CD8-positive, alpha-beta T cell (primary cell): ENCODE measurements at regions of chr17 and their contacts with region 1.

Region 1: GRCh38 chr17:81101614-81102306 is 63.5 kb upstream of the PVALEF start:
- DNase-seq: peak; percentile 77 to 93 (median 86)
- ATAC-seq: peak; percentile 99
- H3K4me3 ChIP-seq: no peak overlapping the region
- H3K4me3 Mint-ChIP-seq: no peak overlapping the region
- H3K27ac ChIP-seq: no peak overlapping the region
- H3K27ac Mint-ChIP-seq: no peak overlapping the region
- H3K4me1 ChIP-seq: peaks cover 20% of the 10 kb centered on the region
- H3K4me1 Mint-ChIP-seq: peaks cover 9% of the 10 kb centered on the region
- H3K27me3 ChIP-seq: no peaks in the 10 kb centered on the region
- H3K27me3 Mint-ChIP-seq: no peaks in the 10 kb centered on the region
- CTCF ChIP-seq: peak; percentile 100

Region 2: GRCh38 chr17:80976701-80977100 is 125.1 kb before region 1 on chr17:
- CTCF ChIA-PET with region 1: no interaction called
- POLR2A ChIA-PET with region 1: no interaction called
- intact Hi-C with region 1: no loop called
- DNase-seq: no peak
- ATAC-seq: no peak
- H3K4me3 ChIP-seq: no peak overlapping the region
- H3K4me3 Mint-ChIP-seq: no peak overlapping the region
- H3K27ac ChIP-seq: no peak overlapping the region
- H3K27ac Mint-ChIP-seq: no peak overlapping the region
- H3K4me1 ChIP-seq: peaks cover 6% of the 10 kb centered on the region
- H3K4me1 Mint-ChIP-seq: peaks cover 7% of the 10 kb centered on the region
- H3K27me3 ChIP-seq: peaks cover 2 to 5% of the 10 kb centered on the region in 2 experiments
- H3K27me3 Mint-ChIP-seq: peaks cover 19% of the 10 kb centered on the region
- CTCF ChIP-seq: no peak

Region 3: GRCh38 chr17:80991645-80992076 is 110.1 kb before region 1 on chr17 and contains the start of gene CHMP6:
- CTCF ChIA-PET with region 1: interaction called, 33 read pairs
- POLR2A ChIA-PET with region 1: no interaction called
- intact Hi-C with region 1: loop called (anchors 1 kb)
- DNase-seq: peak; percentile 48 to 86 (median 70)
- ATAC-seq: peak; percentile 69
- H3K4me3 ChIP-seq: peak within 1 kb of the TSS; percentile 74 to 84
- H3K4me3 Mint-ChIP-seq: peak within 1 kb of the TSS; percentile 81
- H3K27ac ChIP-seq: peak within 1 kb of the TSS; percentile 59 to 84
- H3K27ac Mint-ChIP-seq: peak within 1 kb of the TSS; percentile 84
- H3K4me1 ChIP-seq: peaks cover 32% of the 10 kb centered on the region
- H3K4me1 Mint-ChIP-seq: peaks cover 20% of the 10 kb centered on the region
- H3K27me3 ChIP-seq: no peaks in the 10 kb centered on the region
- H3K27me3 Mint-ChIP-seq: no peaks in the 10 kb centered on the region
- CTCF ChIP-seq: no peak
- total RNA-seq, gene CHMP6: 10.6 to 11.5 TPM

Region 4: DNA sequence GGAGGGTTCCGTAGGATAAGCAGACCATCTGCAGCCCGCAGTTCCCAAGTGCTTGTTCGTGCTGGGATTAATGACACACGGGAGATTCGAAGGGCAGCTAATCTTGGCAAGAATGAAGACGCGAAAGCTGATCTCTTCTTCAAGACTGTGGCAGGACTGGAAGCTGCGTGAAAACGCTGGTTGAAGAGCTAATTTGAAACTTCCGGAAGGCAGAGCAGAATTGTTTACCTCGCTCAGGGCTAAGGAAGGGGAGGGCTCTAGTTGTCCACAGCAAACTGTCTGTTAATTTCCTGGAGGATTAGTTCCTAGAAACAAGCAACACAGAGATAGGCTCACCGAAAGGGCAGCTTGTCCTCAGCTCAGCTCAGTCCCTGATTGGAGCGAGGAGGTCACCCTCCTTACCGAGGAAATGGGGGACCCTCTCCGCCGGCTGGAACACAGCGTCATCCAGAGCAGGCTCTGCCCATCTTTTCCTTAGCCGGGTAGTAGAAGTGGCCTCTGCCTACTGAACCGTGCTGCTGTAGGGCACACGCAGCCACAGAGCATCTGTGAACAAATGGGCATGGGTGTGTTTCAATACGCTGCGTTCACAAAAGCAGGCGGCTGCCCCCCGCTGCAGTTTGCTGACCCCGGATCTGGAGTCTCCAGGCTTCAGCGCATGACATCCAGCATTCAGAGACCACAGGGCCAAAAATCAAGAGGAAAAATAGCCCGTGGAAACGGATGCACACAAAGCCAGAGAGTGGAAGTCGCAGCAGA is 83.5 kb before region 1 on chr17:
- CTCF ChIA-PET with region 1: interaction called, 43 read pairs
- POLR2A ChIA-PET with region 1: no interaction called
- intact Hi-C with region 1: loop called (anchors 1 kb)
- DNase-seq: peak in 7 of 9 experiments; percentile 23 to 74 (median 50)
- ATAC-seq: peak; percentile 79
- H3K4me3 ChIP-seq: peak overlapping the region; percentile 56 to 62
- H3K4me3 Mint-ChIP-seq: peak overlapping the region; percentile 78
- H3K27ac ChIP-seq: peak overlapping the region; percentile 53 to 87
- H3K27ac Mint-ChIP-seq: peak overlapping the region; percentile 94
- H3K4me1 ChIP-seq: peaks cover 24% of the 10 kb centered on the region
- H3K4me1 Mint-ChIP-seq: peaks cover 32% of the 10 kb centered on the region
- H3K27me3 ChIP-seq: no peaks in the 10 kb centered on the region
- H3K27me3 Mint-ChIP-seq: no peaks in the 10 kb centered on the region
- CTCF ChIP-seq: no peak

Region 5: DNA sequence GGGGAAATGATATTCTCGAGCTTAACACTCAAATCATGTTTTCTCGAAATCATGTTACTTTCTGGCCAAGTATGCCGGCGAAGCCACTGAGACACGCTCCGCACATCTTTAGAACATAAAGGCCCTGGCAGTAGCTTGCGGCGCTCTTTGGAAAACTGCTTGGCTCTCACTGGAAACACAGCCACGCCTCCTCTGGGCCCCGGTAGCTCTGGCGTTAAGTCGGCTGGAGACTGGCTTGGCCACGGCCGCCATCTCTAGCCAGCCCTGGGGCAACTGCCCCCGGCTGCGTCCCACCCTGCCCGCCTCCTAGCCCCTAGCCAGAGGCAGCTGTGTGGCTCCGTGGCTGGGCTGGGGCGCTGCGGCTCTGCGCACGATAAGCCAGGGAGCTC is 76.0 kb before region 1 on chr17:
- CTCF ChIA-PET with region 1: interaction called, 43 read pairs
- POLR2A ChIA-PET with region 1: no interaction called
- intact Hi-C with region 1: loop called (anchors 1 kb)
- DNase-seq: peak in 1 of 9 experiments; percentile 4
- ATAC-seq: no peak
- H3K4me3 ChIP-seq: no peak overlapping the region
- H3K4me3 Mint-ChIP-seq: no peak overlapping the region
- H3K27ac ChIP-seq: no peak overlapping the region
- H3K27ac Mint-ChIP-seq: no peak overlapping the region
- H3K4me1 ChIP-seq: peaks cover 9% of the 10 kb centered on the region
- H3K4me1 Mint-ChIP-seq: peaks cover 12% of the 10 kb centered on the region
- H3K27me3 ChIP-seq: no peaks in the 10 kb centered on the region
- H3K27me3 Mint-ChIP-seq: peaks cover 8% of the 10 kb centered on the region
- CTCF ChIP-seq: no peak

Region 6: DNA sequence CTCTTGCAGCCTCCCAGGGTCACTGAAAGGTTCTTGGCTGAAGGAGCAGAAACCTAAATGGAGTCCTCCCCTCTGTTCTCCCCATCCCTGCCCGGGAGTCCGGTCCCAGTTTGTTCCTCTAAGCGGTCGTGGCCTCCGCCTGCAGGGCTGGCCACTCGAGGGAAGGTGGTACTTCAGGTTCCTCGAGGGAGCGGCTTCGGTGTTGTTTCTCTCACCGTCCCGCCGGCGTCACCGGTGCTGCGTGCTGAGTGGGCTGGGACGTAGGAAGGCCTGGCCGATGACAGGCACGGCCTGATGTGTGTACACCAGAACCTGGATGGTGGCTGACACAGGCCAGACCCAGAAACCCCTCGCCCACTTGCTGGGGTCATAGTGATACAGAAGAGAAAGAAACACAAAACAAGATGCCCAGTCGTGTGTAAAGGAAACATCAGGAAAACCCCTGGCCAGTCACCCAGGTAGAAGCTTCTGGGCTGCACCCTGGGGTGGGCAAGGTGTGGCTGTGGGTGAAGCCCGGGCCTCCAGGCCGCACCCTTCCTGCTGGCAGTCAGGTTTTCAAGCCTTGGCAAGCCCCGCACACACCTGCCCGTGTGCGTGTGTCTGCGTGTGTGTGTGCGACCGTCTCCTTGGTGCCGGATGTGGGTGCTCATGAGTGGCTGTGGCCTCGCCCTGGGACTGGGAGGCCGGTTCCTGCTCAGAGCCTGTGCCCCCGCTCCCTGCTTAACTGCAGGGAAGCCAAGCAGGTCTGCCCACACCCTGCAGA is 14.8 kb before region 1 on chr17:
- CTCF ChIA-PET with region 1: interaction called, 11 read pairs
- POLR2A ChIA-PET with region 1: no interaction called
- intact Hi-C with region 1: no loop called
- DNase-seq: peak in 1 of 9 experiments; percentile 35
- ATAC-seq: no peak
- H3K4me3 ChIP-seq: no peak overlapping the region
- H3K4me3 Mint-ChIP-seq: no peak overlapping the region
- H3K27ac ChIP-seq: no peak overlapping the region
- H3K27ac Mint-ChIP-seq: no peak overlapping the region
- H3K4me1 ChIP-seq: peaks cover 4% of the 10 kb centered on the region
- H3K4me1 Mint-ChIP-seq: peaks cover 8% of the 10 kb centered on the region
- H3K27me3 ChIP-seq: no peaks in the 10 kb centered on the region
- H3K27me3 Mint-ChIP-seq: no peaks in the 10 kb centered on the region
- CTCF ChIP-seq: no peak

Region 7: DNA sequence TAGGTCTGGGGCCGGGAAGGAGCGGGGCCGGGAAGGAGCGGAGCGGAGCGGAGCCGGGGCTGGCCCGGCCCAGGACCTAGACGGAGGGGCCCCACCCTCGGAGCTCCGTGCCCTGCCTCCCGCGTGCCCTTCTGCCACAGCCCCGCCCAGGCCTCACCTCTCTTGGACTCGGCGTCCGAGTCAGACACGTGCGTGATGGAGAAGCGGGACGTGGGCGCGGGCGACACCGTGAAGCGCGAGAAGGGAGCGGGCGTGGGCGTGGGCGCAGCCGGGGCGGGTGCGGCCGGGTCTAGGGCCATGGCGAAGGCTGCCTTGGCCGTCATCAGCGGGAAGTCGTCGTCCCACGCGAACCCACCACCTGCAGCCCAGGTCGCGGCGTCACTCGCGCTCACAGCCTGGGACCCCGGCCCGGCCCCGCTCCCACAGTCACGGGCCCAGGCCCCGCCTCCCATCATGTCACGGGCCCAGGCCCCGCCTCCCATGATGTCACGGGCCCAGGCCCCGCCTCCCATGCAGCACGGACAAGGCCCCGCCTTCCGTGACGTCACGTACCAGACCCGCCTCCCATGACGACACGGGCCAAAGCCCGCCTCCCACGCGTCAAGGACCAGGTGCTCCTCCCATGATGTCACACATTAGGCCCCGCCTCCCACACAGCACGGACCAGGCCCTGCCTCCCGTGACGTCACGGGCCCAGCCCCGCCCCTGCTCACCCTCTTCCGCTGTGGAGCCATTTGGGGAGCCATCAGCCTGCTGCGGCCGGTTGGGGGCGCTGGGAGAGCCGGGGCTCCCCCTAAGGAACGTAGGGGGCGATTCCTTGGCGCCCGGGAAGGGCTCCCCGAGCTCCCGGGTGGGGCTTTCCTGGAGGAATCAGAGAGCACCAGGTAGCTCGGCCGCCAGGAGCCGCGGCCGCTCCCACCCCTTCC is 17.7 kb after region 1 on chr17:
- CTCF ChIA-PET with region 1: interaction called, 14 read pairs
- POLR2A ChIA-PET with region 1: no interaction called
- intact Hi-C with region 1: no loop called
- DNase-seq: peak; percentile 18 to 94 (median 73)
- ATAC-seq: peak; percentile 87
- H3K4me3 ChIP-seq: peak overlapping the region; percentile 8 to 23
- H3K4me3 Mint-ChIP-seq: peak overlapping the region; percentile 73
- H3K27ac ChIP-seq: no peak overlapping the region
- H3K27ac Mint-ChIP-seq: peak overlapping the region; percentile 91
- H3K4me1 ChIP-seq: peaks cover 6% of the 10 kb centered on the region
- H3K4me1 Mint-ChIP-seq: peaks cover 6% of the 10 kb centered on the region
- H3K27me3 ChIP-seq: no peaks in the 10 kb centered on the region
- H3K27me3 Mint-ChIP-seq: peaks cover 4% of the 10 kb centered on the region
- CTCF ChIP-seq: no peak